Activated CD4-positive, alpha-beta memory T cell treated with anti-CD3 and anti-CD28 coated beads for 36 hours (primary cell): ENCODE measurements at regions of chr12 and their contacts with region 1.

Region 1: GRCh38 chr12:122793685-122794106 is 19.3 kb downstream of the CCDC62 start:
- DNase-seq: no peak
- H3K4me3 Mint-ChIP-seq: no peak overlapping the region
- H3K27ac Mint-ChIP-seq: no peak overlapping the region
- H3K4me1 Mint-ChIP-seq: no peaks in the 10 kb centered on the region
- H3K27me3 Mint-ChIP-seq: no peaks in the 10 kb centered on the region

Region 2: DNA sequence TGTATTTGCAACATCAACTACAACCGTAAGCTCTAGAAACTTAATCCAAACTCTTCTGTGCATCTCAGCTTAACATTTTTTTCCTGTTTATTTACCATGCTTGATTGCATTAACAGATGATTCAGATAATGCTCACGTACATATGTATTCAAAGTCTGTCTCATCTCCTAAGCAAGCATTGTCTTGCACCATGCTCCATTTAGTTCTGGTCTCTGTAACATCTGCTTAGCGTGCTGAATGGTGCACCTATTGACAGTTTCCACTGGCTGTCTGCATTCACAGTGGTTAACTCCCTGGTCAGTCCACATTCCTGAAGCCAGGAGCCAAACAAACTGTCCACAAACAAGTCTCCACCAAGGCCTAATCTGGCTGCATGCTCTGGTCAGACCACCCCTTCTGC is 182.8 kb before region 1 on chr12:
- CTCF ChIA-PET with region 1: no interaction called
- POLR2A ChIA-PET with region 1: no interaction called
- intact Hi-C with region 1: no loop called
- DNase-seq: no peak
- H3K4me3 Mint-ChIP-seq: no peak overlapping the region
- H3K27ac Mint-ChIP-seq: no peak overlapping the region
- H3K4me1 Mint-ChIP-seq: no peaks in the 10 kb centered on the region
- H3K27me3 Mint-ChIP-seq: no peaks in the 10 kb centered on the region

Region 3: GRCh38 chr12:122803937-122804336 is 10.2 kb after region 1 on chr12:
- CTCF ChIA-PET with region 1: interaction called, 20 read pairs
- POLR2A ChIA-PET with region 1: interaction called, 3 read pairs
- intact Hi-C with region 1: no loop called
- DNase-seq: no peak
- H3K4me3 Mint-ChIP-seq: no peak overlapping the region
- H3K27ac Mint-ChIP-seq: no peak overlapping the region
- H3K4me1 Mint-ChIP-seq: no peaks in the 10 kb centered on the region
- H3K27me3 Mint-ChIP-seq: no peaks in the 10 kb centered on the region

Region 4: GRCh38 chr12:122834104-122834920 is 40.6 kb after region 1 on chr12:
- CTCF ChIA-PET with region 1: interaction called, 18 read pairs
- POLR2A ChIA-PET with region 1: no interaction called
- intact Hi-C with region 1: loop called (anchors 2 kb)
- DNase-seq: peak; percentile 37
- H3K4me3 Mint-ChIP-seq: peak overlapping the region; percentile 77
- H3K27ac Mint-ChIP-seq: no peak overlapping the region
- H3K4me1 Mint-ChIP-seq: peaks cover 22% of the 10 kb centered on the region
- H3K27me3 Mint-ChIP-seq: no peaks in the 10 kb centered on the region

Region 5: GRCh38 chr12:122845865-122846621 is 52.3 kb after region 1 on chr12:
- CTCF ChIA-PET with region 1: interaction called, 11 read pairs
- POLR2A ChIA-PET with region 1: no interaction called
- intact Hi-C with region 1: no loop called
- DNase-seq: no peak
- H3K4me3 Mint-ChIP-seq: no peak overlapping the region
- H3K27ac Mint-ChIP-seq: no peak overlapping the region
- H3K4me1 Mint-ChIP-seq: no peaks in the 10 kb centered on the region
- H3K27me3 Mint-ChIP-seq: no peaks in the 10 kb centered on the region

Region 6: GRCh38 chr12:122860346-122861090 is 66.8 kb after region 1 on chr12:
- CTCF ChIA-PET with region 1: interaction called, 14 read pairs
- POLR2A ChIA-PET with region 1: no interaction called
- intact Hi-C with region 1: no loop called
- DNase-seq: peak; percentile 88
- H3K4me3 Mint-ChIP-seq: no peak overlapping the region
- H3K27ac Mint-ChIP-seq: no peak overlapping the region
- H3K4me1 Mint-ChIP-seq: no peaks in the 10 kb centered on the region
- H3K27me3 Mint-ChIP-seq: no peaks in the 10 kb centered on the region

Region 7: DNA sequence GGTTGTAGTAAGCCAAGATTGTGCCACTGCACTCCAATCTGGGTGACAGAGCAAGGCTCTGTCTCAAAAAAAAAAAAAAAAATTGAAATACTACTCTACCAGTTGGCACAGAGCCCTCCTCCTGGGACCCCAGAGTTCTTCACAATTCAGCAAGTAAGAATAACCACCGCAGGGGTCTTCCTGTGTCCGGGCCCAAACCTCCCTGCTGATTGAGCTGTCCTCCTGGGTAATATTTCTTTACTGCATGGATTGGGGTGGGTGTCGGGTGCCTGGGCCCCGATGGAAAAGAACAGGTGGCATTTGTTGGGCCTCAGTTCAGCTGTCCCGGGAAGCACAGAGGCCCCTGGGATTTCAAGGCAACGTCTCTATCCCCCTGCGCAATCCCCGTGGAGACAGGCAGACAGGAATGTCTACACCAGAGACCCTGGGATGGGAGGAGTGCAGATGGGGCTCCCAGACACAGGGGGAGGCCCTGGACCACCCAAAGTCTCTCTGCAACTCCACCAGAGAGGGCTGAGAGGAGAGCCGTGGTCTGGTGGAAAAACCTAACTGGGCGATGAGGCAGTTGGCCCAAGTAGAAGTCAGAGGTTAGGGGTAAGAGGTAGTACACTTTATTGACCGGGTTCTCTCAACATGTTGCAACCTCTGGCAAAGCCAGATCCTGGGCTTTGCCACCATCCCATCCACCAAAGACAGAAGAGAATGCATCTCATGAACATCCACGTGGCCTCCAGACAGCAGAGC is 134.9 kb after region 1 on chr12:
- CTCF ChIA-PET with region 1: no interaction called
- POLR2A ChIA-PET with region 1: no interaction called
- intact Hi-C with region 1: no loop called
- DNase-seq: no peak
- H3K4me3 Mint-ChIP-seq: no peak overlapping the region
- H3K27ac Mint-ChIP-seq: no peak overlapping the region
- H3K4me1 Mint-ChIP-seq: no peaks in the 10 kb centered on the region
- H3K27me3 Mint-ChIP-seq: no peaks in the 10 kb centered on the region

Region 8: GRCh38 chr12:122946690-122947341 is 153.1 kb after region 1 on chr12:
- CTCF ChIA-PET with region 1: interaction called, 39 read pairs
- POLR2A ChIA-PET with region 1: no interaction called
- intact Hi-C with region 1: loop called (anchors 1 kb)
- DNase-seq: peak; percentile 95
- H3K4me3 Mint-ChIP-seq: no peak overlapping the region
- H3K27ac Mint-ChIP-seq: peak overlapping the region; percentile 35
- H3K4me1 Mint-ChIP-seq: peaks cover 20% of the 10 kb centered on the region
- H3K27me3 Mint-ChIP-seq: no peaks in the 10 kb centered on the region

Region 9: GRCh38 chr12:122951979-122952892 is 158.5 kb after region 1 on chr12:
- CTCF ChIA-PET with region 1: interaction called, 39 read pairs
- POLR2A ChIA-PET with region 1: no interaction called
- intact Hi-C with region 1: loop called (anchors 1 kb)
- DNase-seq: peak; percentile 85
- H3K4me3 Mint-ChIP-seq: no peak overlapping the region
- H3K27ac Mint-ChIP-seq: no peak overlapping the region
- H3K4me1 Mint-ChIP-seq: peaks cover 4% of the 10 kb centered on the region
- H3K27me3 Mint-ChIP-seq: no peaks in the 10 kb centered on the region